ENCODE measurements at regions of chrX and their contacts with region 1.

Region 1: DNA sequence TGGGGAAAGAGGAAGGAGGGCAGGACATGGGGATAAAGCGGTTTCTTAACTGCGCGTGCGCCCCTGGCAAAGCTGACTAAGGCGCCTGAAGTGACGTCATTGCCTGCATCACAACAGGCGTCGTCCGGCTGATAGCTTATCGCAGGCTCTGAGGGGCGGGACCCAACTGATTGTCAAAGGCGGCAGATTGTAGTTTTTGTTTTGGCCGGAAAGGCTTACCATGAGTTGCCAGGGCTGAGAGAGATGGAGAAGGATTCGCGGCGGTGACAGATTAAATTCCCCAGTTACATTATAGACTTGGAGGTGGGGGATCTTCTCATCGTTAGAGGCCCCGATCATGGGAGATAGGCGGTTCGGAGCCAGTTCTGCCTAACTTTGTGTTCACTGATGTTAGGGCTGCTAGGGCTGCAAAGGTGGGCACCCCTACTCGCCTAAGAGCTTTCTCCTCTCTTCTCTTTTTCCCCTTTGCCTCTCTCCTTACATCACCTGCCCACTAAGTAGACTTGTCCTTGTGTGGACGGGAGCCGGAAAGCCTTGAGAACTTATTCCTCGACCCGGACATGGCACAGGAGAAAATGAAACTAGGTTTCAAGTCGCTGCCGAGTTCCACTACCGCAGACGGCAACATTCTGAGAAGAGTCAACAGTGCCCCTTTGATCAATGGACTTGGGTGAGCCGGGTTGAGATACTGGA is 148.9 kb upstream of the PLAC1 start:
- DNase-seq: peak; percentile 83
- ATAC-seq: peak; percentile 91
- H3K4me3 ChIP-seq: peak overlapping the region; percentile 81
- H3K27ac ChIP-seq: peak overlapping the region; percentile 28
- H3K4me1 ChIP-seq: no peaks in the 10 kb centered on the region
- H3K27me3 ChIP-seq: no peaks in the 10 kb centered on the region
- CTCF ChIP-seq: no peak

Region 2: DNA sequence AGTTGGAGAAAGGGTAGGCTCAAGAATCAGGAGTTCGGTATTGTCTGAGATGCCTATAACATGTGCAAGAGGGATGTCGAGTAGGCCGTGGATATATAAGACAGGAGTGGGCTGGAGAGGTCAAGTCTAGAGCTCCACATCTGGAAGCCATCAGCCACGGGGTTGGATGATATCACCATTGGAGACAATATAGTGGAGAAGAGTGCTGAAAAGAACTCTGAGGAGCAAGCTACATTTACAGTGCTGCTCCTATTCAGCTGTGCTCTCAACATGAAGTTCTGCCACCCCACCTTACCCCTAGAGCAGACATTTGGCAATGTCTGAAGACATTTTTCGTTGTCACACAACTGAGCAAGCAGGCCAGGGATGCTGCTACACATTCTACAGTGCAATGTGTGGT is 128.0 kb before region 1 on chrX:
- CTCF ChIA-PET with region 1: no interaction called
- POLR2A ChIA-PET with region 1: no interaction called
- intact Hi-C with region 1: no loop called
- DNase-seq: no peak
- ATAC-seq: no peak
- H3K4me3 ChIP-seq: no peak overlapping the region
- H3K27ac ChIP-seq: no peak overlapping the region
- H3K4me1 ChIP-seq: peaks cover 16% of the 10 kb centered on the region
- H3K27me3 ChIP-seq: no peaks in the 10 kb centered on the region
- CTCF ChIP-seq: no peak

Region 3: GRCh38 chrX:134760650-134761049 is 46.5 kb before region 1 on chrX:
- CTCF ChIA-PET with region 1: interaction called, 12 read pairs
- POLR2A ChIA-PET with region 1: no interaction called
- intact Hi-C with region 1: no loop called
- DNase-seq: no peak
- ATAC-seq: no peak
- H3K4me3 ChIP-seq: no peak overlapping the region
- H3K27ac ChIP-seq: no peak overlapping the region
- H3K4me1 ChIP-seq: peaks cover 3% of the 10 kb centered on the region; the same call in 1 of the 2 replicates
- H3K27me3 ChIP-seq: no peaks in the 10 kb centered on the region
- CTCF ChIP-seq: no peak

Region 4: GRCh38 chrX:134868771-134869495 is 61.7 kb after region 1 on chrX:
- CTCF ChIA-PET with region 1: no interaction called
- POLR2A ChIA-PET with region 1: no interaction called
- intact Hi-C with region 1: no loop called
- DNase-seq: peak; percentile 84
- ATAC-seq: peak; percentile 95
- H3K4me3 ChIP-seq: no peak overlapping the region
- H3K27ac ChIP-seq: peak overlapping the region; percentile 95
- H3K4me1 ChIP-seq: peaks cover 14% of the 10 kb centered on the region
- H3K27me3 ChIP-seq: no peaks in the 10 kb centered on the region
- CTCF ChIP-seq: no peak

Region 5: GRCh38 chrX:134886201-134886600 is 79.0 kb after region 1 on chrX:
- CTCF ChIA-PET with region 1: no interaction called
- POLR2A ChIA-PET with region 1: interaction called, 3 read pairs
- intact Hi-C with region 1: loop called (anchors 5 kb)
- DNase-seq: peak; percentile 89
- ATAC-seq: peak; percentile 78
- H3K4me3 ChIP-seq: peak overlapping the region; percentile 51; the same call in 1 of the 2 replicates
- H3K27ac ChIP-seq: peak overlapping the region; percentile 96
- H3K4me1 ChIP-seq: peaks cover 45% of the 10 kb centered on the region
- H3K27me3 ChIP-seq: no peaks in the 10 kb centered on the region
- CTCF ChIP-seq: no peak

Measured in PC-3 (cell line).